AG04450 (cell line): ENCODE measurements at regions of chr7 and their contacts with region 1.

Region 1: GRCh38 chr7:90629297-90629918 is 33.3 kb downstream of the CDK14 start:
- DNase-seq: peak; percentile 26
- H3K4me3 ChIP-seq: no peak overlapping the region
- H3K27ac ChIP-seq: no peak overlapping the region
- H3K27me3 ChIP-seq: no peaks in the 10 kb centered on the region
- CTCF ChIP-seq: peak; percentile 70

Region 2: DNA sequence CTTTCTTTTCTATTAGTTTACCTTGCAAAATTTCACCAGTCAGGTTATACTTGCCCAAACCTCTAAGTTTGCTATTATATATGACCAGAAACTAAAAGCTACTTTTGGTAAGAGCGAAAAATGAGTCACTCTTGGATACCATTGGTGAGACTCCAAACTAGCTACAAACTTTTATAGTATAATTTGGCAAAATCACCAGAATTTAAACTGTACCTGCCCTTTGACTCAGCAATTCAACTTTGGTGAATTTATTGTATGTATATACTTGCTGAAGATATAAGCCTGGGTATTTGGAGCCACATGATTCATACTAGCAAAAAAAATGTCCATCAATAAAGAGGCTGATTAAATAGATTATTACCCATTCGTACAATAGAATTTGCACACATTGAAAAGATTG is 653.8 kb before region 1 on chr7:
- CTCF ChIA-PET with region 1: no interaction called
- POLR2A ChIA-PET with region 1: no interaction called
- DNase-seq: no peak
- H3K4me3 ChIP-seq: no peak overlapping the region
- H3K27ac ChIP-seq: no peak overlapping the region
- H3K27me3 ChIP-seq: no peaks in the 10 kb centered on the region
- CTCF ChIP-seq: no peak

Region 3: GRCh38 chr7:90488240-90488639 is 141.2 kb before region 1 on chr7:
- CTCF ChIA-PET with region 1: no interaction called
- POLR2A ChIA-PET with region 1: no interaction called
- DNase-seq: no peak
- H3K4me3 ChIP-seq: no peak overlapping the region
- H3K27ac ChIP-seq: no peak overlapping the region
- H3K27me3 ChIP-seq: no peaks in the 10 kb centered on the region
- CTCF ChIP-seq: no peak

Region 4: DNA sequence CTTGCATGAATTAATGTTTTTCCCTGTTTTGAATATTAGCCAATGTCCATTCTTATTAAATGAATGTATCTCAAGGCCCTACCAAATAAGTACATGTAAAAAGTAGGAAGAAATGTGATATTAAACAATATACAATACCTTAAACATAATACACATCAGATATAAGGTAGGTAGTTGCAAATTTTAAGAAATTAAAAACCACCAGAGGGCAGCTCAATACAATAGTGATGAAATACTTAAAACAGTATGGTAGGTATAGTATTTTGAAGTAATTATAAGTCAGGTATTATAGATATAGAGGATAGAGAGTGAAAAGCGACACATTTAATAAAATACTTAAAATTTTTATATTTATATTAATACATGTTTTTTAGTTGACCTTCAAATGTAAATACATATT is 76.9 kb before region 1 on chr7:
- CTCF ChIA-PET with region 1: no interaction called
- POLR2A ChIA-PET with region 1: no interaction called
- DNase-seq: no peak
- H3K4me3 ChIP-seq: no peak overlapping the region
- H3K27ac ChIP-seq: no peak overlapping the region
- H3K27me3 ChIP-seq: no peaks in the 10 kb centered on the region
- CTCF ChIP-seq: peak; percentile 34; the same call in 1 of the 2 replicates

Region 5: DNA sequence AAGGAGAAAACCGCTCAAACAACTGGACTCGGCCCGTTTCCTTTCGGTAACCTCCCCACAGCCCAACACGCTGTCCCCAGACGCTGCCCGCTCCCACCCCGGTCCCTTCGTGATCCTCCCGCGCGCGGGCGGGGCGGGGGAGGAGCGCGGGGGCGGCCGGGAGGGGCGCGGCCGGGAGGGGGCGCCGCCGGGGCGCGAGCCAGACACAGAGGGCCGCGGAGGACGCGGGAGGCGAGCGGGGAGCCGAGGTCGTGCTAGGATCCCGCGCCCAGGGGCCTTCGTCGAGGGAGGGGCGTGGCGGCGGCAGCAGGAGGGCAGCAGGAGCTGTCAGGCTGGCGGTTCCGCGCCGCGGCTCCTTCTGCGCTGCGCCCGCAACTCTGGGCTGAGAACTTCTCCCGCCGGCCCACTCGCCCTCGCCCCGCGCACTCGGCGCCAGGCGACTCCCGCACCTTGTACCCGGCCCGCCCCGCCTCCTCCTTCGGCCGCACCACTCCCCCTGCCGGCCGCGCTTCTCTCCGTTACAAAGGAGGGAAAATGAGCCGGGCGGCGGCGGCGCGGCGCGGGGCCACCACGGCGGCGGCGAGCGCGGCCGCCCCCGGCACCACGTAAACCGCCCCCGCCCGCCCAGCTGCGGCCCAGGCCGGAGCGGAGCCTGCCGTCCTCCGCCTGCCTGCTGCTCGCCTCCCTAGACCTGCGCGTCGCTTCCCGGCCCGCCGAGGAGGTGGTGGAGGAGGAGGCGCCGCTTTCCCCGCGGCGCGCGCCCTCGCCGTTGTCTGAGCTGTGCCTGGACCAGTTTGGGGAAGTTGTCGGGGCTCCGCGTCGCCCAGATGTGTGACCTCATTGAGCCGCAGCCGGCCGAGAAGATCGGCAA is 33.4 kb before region 1 on chr7 and contains the start of gene CDK14:
- CTCF ChIA-PET with region 1: interaction called, 11 read pairs
- POLR2A ChIA-PET with region 1: interaction called, 6 read pairs
- DNase-seq: no peak
- H3K4me3 ChIP-seq: peak within 1 kb of the TSS; percentile 79
- H3K27ac ChIP-seq: peak within 1 kb of the TSS; percentile 72
- H3K27me3 ChIP-seq: no peaks in the 10 kb centered on the region
- CTCF ChIP-seq: peak; percentile 46
- polyA plus RNA-seq, gene CDK14: 24.6 and 28.4 TPM in 2 replicates

Region 6: GRCh38 chr7:90655566-90655965 is 26.2 kb after region 1 on chr7:
- CTCF ChIA-PET with region 1: interaction called, 18 read pairs
- POLR2A ChIA-PET with region 1: no interaction called
- DNase-seq: peak; percentile 72
- H3K4me3 ChIP-seq: no peak overlapping the region
- H3K27ac ChIP-seq: peak overlapping the region; percentile 53
- H3K27me3 ChIP-seq: no peaks in the 10 kb centered on the region
- CTCF ChIP-seq: no peak

Region 7: GRCh38 chr7:90858546-90858945 is 229.1 kb after region 1 on chr7:
- CTCF ChIA-PET with region 1: no interaction called
- POLR2A ChIA-PET with region 1: no interaction called
- DNase-seq: no peak
- H3K4me3 ChIP-seq: no peak overlapping the region
- H3K27ac ChIP-seq: no peak overlapping the region
- H3K27me3 ChIP-seq: no peaks in the 10 kb centered on the region
- CTCF ChIP-seq: no peak